Dendritic cell treated with granulocyte-macrophage colony-stimulating factor and Interleukin-4, amounts not matched to agents 40 ng/mL and 50 ng/mL, for 4 days (primary cell): ENCODE measurements at regions of chr21 and their contacts with region 1.

Region 1: DNA sequence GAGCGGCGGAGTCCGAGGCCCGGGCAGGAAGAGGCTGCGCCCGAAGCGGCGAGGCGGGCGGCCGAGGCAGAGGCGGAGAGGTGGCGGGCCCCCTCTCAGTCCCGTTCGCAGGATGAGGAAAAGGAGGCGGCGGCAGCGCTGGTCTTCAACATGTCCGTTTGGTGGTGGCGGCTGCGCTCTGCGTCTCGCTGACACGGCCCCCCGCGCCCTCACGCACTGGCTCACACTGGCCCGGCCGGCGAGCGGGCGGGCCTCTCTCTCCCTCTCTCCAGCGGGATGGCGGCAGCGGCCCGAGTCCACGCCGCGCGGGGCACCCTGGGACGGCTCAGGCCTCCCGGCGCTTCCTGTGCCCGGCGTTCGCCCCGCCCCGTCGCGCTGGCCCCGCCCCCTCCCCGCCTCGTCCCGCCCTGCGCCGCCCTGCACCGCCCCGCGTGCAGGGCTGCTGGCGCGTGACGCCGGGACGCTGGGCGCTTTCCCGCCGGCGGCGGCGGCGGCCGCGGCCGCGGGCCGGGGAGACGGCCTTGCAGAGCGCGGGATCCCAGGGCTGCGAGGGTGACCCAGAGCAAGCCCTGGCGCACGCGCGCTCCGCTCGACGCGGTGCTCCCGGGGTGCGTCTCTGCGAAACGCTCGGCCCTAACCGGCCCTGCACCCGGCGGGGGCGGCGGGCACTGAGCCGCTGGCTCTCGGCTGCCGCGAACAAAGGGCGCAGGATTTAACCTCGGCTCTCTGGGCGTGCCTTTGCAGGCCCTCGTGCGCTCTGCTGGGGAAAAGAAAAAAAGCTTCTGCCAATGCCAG is at the start of gene SCAF4:
- H3K4me3 Mint-ChIP-seq: peak within 1 kb of the TSS; percentile 80
- H3K27ac Mint-ChIP-seq: no peak within 1 kb of the TSS
- H3K4me1 Mint-ChIP-seq: no peaks in the 10 kb centered on the region
- H3K27me3 Mint-ChIP-seq: no peaks in the 10 kb centered on the region

Region 2: DNA sequence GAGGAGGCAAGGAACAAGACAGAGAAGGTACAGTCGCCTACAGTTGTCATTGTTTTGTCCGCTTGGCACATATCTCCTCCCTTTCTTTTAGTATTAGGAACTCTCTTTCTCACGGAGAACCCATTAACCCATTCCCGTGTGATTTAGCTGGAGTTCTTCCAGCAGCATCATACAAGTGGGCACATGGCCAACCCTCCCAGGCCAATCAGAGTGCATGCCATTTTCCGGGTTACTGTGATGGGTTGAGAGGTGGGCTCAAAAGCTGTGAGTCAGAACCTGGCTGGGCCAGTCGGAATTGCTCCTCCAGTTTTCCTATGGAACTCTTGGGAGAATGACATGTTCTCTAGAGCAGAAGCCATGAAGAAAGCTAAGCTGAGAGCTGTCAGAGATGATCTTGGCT is 155.6 kb before region 1 on chr21:
- intact Hi-C with region 1: no loop called
- H3K4me3 Mint-ChIP-seq: no peak overlapping the region
- H3K27ac Mint-ChIP-seq: no peak overlapping the region
- H3K4me1 Mint-ChIP-seq: peaks cover 13% of the 10 kb centered on the region
- H3K27me3 Mint-ChIP-seq: peaks cover 6% of the 10 kb centered on the region

Region 3: DNA sequence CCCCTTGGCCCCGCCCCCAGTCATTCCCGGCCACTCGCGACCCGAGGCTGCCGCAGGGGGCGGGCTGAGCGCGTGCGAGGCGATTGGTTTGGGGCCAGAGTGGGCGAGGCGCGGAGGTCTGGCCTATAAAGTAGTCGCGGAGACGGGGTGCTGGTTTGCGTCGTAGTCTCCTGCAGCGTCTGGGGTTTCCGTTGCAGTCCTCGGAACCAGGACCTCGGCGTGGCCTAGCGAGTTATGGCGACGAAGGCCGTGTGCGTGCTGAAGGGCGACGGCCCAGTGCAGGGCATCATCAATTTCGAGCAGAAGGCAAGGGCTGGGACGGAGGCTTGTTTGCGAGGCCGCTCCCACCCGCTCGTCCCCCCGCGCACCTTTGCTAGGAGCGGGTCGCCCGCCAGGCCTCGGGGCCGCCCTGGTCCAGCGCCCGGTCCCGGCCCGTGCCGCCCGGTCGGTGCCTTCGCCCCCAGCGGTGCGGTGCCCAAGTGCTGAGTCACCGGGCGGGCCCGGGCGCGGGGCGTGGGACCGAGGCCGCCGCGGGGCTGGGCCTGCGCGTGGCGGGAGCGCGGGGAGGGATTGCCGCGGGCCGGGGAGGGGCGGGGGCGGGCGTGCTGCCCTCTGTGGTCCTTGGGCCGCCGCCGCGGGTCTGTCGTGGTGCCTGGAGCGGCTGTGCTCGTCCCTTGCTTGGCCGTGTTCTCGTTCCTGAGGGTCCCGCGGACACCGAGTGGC is 72.3 kb before region 1 on chr21 and contains the start of gene SOD1:
- intact Hi-C with region 1: loop called (anchors 1 kb)
- H3K4me3 Mint-ChIP-seq: peak within 1 kb of the TSS; percentile 96
- H3K27ac Mint-ChIP-seq: peak within 1 kb of the TSS; percentile 89
- H3K4me1 Mint-ChIP-seq: peaks cover 37% of the 10 kb centered on the region
- H3K27me3 Mint-ChIP-seq: peaks cover 8% of the 10 kb centered on the region

Region 4: GRCh38 chr21:31772674-31773555 is 40.9 kb after region 1 on chr21:
- intact Hi-C with region 1: loop called (anchors 5 kb)
- H3K4me3 Mint-ChIP-seq: peak overlapping the region; percentile 6
- H3K27ac Mint-ChIP-seq: no peak overlapping the region
- H3K4me1 Mint-ChIP-seq: peaks cover 11% of the 10 kb centered on the region
- H3K27me3 Mint-ChIP-seq: peaks cover 4% of the 10 kb centered on the region